ENCODE measurements at regions of chr7 and their contacts with region 1.

Region 1: GRCh38 chr7:30740424-30741181 is 11.3 kb upstream of the INMT start:
- DNase-seq: peak; percentile 92
- H3K4me3 Mint-ChIP-seq: no peak overlapping the region
- H3K27ac Mint-ChIP-seq: no peak overlapping the region
- H3K4me1 Mint-ChIP-seq: peaks cover 8% of the 10 kb centered on the region
- H3K27me3 Mint-ChIP-seq: peaks cover 65% of the 10 kb centered on the region
- CTCF ChIP-seq: peak; percentile 98

Region 2: DNA sequence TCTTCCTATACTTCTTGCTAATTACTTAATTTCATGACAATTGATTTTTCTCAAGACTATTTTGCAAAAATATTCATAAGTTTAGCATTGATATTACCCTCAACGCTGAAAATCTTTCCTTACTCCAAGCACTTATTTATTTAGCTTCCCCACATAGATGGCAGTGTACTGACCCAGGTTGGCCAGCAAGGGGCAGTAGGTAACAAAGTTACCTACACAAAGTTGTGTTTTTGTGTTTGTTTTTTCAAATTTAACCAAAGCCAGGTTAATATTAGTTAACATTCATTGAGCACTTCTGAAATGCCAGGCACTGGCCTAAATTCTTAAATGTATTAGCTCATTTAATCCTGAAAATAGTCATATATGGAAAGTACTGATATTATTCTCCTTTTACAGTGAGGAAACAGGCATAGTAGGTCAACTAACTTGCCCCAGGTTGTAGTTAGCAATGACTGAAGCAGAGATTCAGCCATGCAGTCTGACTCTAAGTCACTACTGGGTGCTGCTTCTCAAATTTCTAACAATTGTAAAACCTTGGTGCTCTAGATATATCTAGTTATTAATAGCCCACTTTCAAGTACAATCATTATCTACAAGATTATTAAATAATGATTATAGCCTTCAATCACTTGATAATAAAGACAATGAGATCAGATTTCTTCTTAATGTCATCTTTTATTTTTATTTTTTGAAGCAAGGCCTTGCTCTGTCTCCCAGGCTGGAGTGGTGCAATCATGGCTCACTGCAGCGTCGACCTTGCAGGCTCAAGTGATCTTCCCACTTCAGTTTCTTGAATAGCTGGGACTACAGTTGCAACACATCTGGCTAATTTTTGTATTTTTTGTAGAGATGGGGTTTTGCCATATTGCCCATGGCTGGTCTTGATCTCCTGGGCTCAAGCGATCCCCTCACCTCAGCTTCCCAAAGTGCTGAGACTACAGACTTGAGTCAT is 230.2 kb before region 1 on chr7:
- CTCF ChIA-PET with region 1: no interaction called
- intact Hi-C with region 1: loop called (anchors 10 kb)
- DNase-seq: peak; percentile 63
- H3K4me3 Mint-ChIP-seq: peak overlapping the region; percentile 59
- H3K27ac Mint-ChIP-seq: peak overlapping the region; percentile 68
- H3K4me1 Mint-ChIP-seq: peaks cover 23% of the 10 kb centered on the region
- H3K27me3 Mint-ChIP-seq: no peaks in the 10 kb centered on the region
- CTCF ChIP-seq: peak; percentile 85

Region 3: DNA sequence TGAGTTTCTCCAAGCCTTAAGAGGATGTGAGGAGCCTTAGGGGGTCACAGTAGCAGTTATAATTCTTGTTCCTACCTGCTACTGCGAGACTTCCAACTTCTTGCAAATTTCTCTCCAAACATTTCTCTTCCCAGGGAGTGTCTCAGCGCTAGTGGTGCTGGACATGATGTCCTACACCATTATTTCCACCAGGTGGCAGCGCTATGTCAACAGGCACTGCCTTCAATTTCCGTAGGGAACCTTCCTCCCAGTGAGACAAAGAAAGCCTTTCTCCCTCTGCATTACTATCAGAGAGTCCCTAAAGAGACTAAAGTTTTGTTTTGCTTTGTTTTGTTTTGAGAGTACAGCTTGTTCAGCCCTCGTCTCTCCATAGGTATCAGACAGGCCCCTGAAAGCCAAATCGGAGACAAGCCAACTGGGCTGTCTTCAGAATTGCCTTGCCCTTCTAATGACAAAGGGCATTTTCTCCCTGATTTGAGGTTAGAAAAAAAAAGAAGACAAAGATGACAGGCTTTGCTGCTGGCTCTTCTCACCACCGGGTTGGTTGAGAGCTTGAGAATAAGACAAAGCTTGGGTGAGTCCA is 191.8 kb before region 1 on chr7:
- CTCF ChIA-PET with region 1: no interaction called
- intact Hi-C with region 1: loop called (anchors 5 kb)
- DNase-seq: peak; percentile 86
- H3K4me3 Mint-ChIP-seq: no peak overlapping the region
- H3K27ac Mint-ChIP-seq: no peak overlapping the region
- H3K4me1 Mint-ChIP-seq: peaks cover 39% of the 10 kb centered on the region
- H3K27me3 Mint-ChIP-seq: no peaks in the 10 kb centered on the region
- CTCF ChIP-seq: peak; percentile 91

Region 4: DNA sequence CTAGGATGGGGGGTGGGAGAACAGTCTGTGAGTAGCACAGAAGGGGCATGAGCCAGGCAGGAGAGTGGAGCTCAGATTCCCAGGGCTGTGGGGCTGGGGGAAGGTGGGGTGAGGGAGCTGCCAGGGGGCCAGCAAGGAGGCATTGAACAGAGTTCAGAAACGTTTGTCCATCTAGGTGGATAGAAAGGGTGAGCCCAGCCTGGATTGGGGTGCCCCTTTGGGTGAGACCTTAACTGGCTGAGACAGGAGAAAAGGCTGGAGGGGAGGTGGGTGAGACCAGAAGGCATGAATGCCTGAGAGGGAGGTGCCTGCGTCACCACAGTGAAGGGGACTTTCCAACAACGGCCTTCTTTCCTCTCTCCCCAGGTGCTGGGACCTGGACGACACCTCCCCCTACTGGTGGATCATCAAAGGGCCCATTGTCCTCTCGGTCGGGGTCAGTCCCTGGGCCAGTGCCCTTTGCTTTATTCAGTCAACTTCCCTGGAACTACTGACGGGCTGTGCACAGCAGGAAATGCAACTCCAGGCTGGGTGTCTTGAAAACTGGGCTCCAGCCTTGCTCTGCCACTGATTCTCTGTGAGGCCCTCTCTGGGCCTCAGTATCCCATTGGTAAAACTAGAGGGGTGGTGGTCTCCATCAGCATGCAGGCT is 234.1 kb after region 1 on chr7:
- CTCF ChIA-PET with region 1: no interaction called
- intact Hi-C with region 1: loop called (anchors 2 kb)
- DNase-seq: peak; percentile 98
- H3K4me3 Mint-ChIP-seq: no peak overlapping the region
- H3K27ac Mint-ChIP-seq: peak overlapping the region; percentile 94
- H3K4me1 Mint-ChIP-seq: peaks cover 65% of the 10 kb centered on the region
- H3K27me3 Mint-ChIP-seq: peaks cover 34% of the 10 kb centered on the region
- CTCF ChIP-seq: peak; percentile 97

Measured in Calu3 (cell line).